PC-3 (cell line): ENCODE measurements at regions of chr10 and their contacts with region 1.

Region 1: GRCh38 chr10:31864834-31865518 is 63.7 kb downstream of the ARHGAP12 start:
- DNase-seq: peak; percentile 38
- ATAC-seq: peak; percentile 66
- H3K4me3 ChIP-seq: peak overlapping the region; percentile 50
- H3K27ac ChIP-seq: peak overlapping the region; percentile 22
- H3K4me1 ChIP-seq: peaks cover 51% of the 10 kb centered on the region
- H3K27me3 ChIP-seq: no peaks in the 10 kb centered on the region
- CTCF ChIP-seq: no peak

Region 2: GRCh38 chr10:31896947-31897384 is 32.0 kb after region 1 on chr10:
- CTCF ChIA-PET with region 1: no interaction called
- POLR2A ChIA-PET with region 1: interaction called, 3 read pairs
- intact Hi-C with region 1: loop called (anchors 2 kb)
- DNase-seq: peak; percentile 63
- ATAC-seq: peak; percentile 96
- H3K4me3 ChIP-seq: no peak overlapping the region
- H3K27ac ChIP-seq: peak overlapping the region; percentile 83
- H3K4me1 ChIP-seq: peaks cover 19% of the 10 kb centered on the region
- H3K27me3 ChIP-seq: no peaks in the 10 kb centered on the region
- CTCF ChIP-seq: no peak

Region 3: GRCh38 chr10:31928549-31929260 is 63.7 kb after region 1 on chr10 and contains the start of gene ARHGAP12:
- CTCF ChIA-PET with region 1: interaction called, 10 read pairs
- POLR2A ChIA-PET with region 1: no interaction called
- intact Hi-C with region 1: loop called (anchors 5 kb)
- DNase-seq: peak; percentile 71
- ATAC-seq: peak; percentile 74
- H3K4me3 ChIP-seq: peak within 1 kb of the TSS; percentile 85
- H3K27ac ChIP-seq: peak within 1 kb of the TSS; percentile 43
- H3K4me1 ChIP-seq: peaks cover 22% of the 10 kb centered on the region
- H3K27me3 ChIP-seq: no peaks in the 10 kb centered on the region
- CTCF ChIP-seq: no peak
- total RNA-seq, gene ARHGAP12: 13.6 and 16.6 TPM in 2 replicates

Region 4: GRCh38 chr10:31947144-31947926 is 82.4 kb after region 1 on chr10:
- CTCF ChIA-PET with region 1: interaction called, 25 read pairs
- POLR2A ChIA-PET with region 1: interaction called, 9 read pairs
- intact Hi-C with region 1: loop called (anchors 1 kb)
- DNase-seq: peak; percentile 86
- ATAC-seq: peak; percentile 76
- H3K4me3 ChIP-seq: peak overlapping the region; percentile 35; the same call in 1 of the 2 replicates
- H3K27ac ChIP-seq: peak overlapping the region; percentile 13; the same call in 1 of the 2 replicates
- H3K4me1 ChIP-seq: peaks cover 47% of the 10 kb centered on the region
- H3K27me3 ChIP-seq: no peaks in the 10 kb centered on the region
- CTCF ChIP-seq: peak; percentile 69

Region 5: GRCh38 chr10:32005050-32005449 is 140.1 kb after region 1 on chr10:
- CTCF ChIA-PET with region 1: no interaction called
- POLR2A ChIA-PET with region 1: no interaction called
- intact Hi-C with region 1: loop called (anchors 5 kb)
- DNase-seq: peak; percentile 72
- ATAC-seq: peak; percentile 76
- H3K4me3 ChIP-seq: no peak overlapping the region
- H3K27ac ChIP-seq: no peak overlapping the region
- H3K4me1 ChIP-seq: no peaks in the 10 kb centered on the region
- H3K27me3 ChIP-seq: no peaks in the 10 kb centered on the region
- CTCF ChIP-seq: peak; percentile 70